PC-9 (cell line): ENCODE measurements at regions of chr2 and their contacts with region 1.

Region 1: GRCh38 chr2:219571311-219572236 is at the start of gene OBSL1:
- DNase-seq: peak; percentile 78 to 85
- H3K4me3 ChIP-seq: peak within 1 kb of the TSS; percentile 67
- H3K27ac ChIP-seq: peak within 1 kb of the TSS; percentile 64
- H3K4me1 ChIP-seq: peaks cover 28% of the 10 kb centered on the region
- H3K27me3 ChIP-seq: no peaks in the 10 kb centered on the region
- CTCF ChIP-seq: no peak
- total RNA-seq, gene OBSL1: 110 and 161 TPM in 2 replicates

Region 2: DNA sequence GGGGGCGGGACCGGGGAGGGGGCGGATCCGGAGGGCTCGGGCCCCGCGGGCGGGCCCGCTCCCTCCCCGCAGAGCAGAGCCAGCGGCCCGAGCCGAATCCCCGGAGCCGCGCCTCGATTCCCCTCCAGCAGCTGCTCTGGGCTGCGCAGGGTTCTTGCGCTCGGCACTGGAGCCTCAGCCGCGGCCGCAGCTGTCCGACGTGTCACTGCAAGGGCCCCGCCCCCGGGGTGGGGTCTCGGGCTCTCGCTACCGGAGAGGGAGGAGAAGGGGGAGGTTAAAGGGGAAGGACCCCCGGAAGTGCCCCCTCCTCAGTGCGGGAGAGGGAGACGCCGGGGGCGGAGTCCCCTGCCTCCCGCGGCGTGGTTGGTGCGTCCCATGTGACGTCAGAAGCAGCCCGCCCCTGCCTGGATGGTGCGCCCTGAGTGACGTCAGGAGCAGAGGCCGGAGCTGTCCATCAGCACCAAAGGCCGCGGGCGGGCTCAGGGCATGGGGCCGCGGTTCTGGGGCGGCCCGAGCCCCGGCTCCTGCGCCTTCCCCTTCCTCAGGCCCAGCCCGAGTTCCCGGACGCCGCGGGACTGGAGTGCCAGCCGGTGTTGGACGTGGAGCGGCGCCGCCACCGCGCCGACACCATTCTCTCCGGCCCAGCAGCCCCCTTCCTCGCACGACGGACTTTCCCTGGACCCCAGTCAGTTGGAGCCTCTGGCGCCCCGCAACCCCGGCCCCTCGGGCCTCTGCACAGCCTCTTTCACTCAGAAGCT is 27.8 kb before region 1 on chr2 and contains the starts of genes CHPF and TMEM198:
- CTCF ChIA-PET with region 1: interaction called, 7 read pairs
- POLR2A ChIA-PET with region 1: no interaction called
- intact Hi-C with region 1: loop called (anchors 2 kb)
- DNase-seq: peak; percentile 91 to 98
- H3K4me3 ChIP-seq: peak within 1 kb of the TSS; percentile 65
- H3K27ac ChIP-seq: peak within 1 kb of the TSS; percentile 55
- H3K4me1 ChIP-seq: no peaks in the 10 kb centered on the region; the same call in 1 of the 2 replicates
- H3K27me3 ChIP-seq: no peaks in the 10 kb centered on the region
- CTCF ChIP-seq: no peak
- total RNA-seq, gene CHPF: 78.2 and 89.7 TPM in 2 replicates
- total RNA-seq, gene TMEM198: 3.6 and 5.8 TPM in 2 replicates

Region 3: GRCh38 chr2:219597552-219598307 is 26.2 kb after region 1 on chr2 and contains the start of gene STK11IP:
- CTCF ChIA-PET with region 1: interaction called, 8 read pairs
- POLR2A ChIA-PET with region 1: interaction called, 9 read pairs
- intact Hi-C with region 1: loop called (anchors 1 kb)
- DNase-seq: peak; percentile 93 to 95
- H3K4me3 ChIP-seq: peak within 1 kb of the TSS; percentile 70
- H3K27ac ChIP-seq: peak within 1 kb of the TSS; percentile 85
- H3K4me1 ChIP-seq: peaks cover 19% of the 10 kb centered on the region
- H3K27me3 ChIP-seq: no peaks in the 10 kb centered on the region
- CTCF ChIP-seq: no peak
- total RNA-seq, gene STK11IP: 40.6 and 42.5 TPM in 2 replicates

Region 4: GRCh38 chr2:221437056-221437455 is 1865.5 kb after region 1 on chr2:
- CTCF ChIA-PET with region 1: interaction called, 10 read pairs
- POLR2A ChIA-PET with region 1: no interaction called
- intact Hi-C with region 1: no loop called
- DNase-seq: no peak
- H3K4me3 ChIP-seq: no peak overlapping the region
- H3K27ac ChIP-seq: no peak overlapping the region
- H3K4me1 ChIP-seq: peaks cover 15% of the 10 kb centered on the region
- H3K27me3 ChIP-seq: no peaks in the 10 kb centered on the region
- CTCF ChIP-seq: no peak